Activated CD8-positive, alpha-beta T cell treated with anti-CD3 and anti-CD28 coated beads for 36 hours (primary cell): ENCODE measurements at regions of chr19 and their contacts with region 1.

Region 1: GRCh38 chr19:41951686-41952172 is 7.4 kb downstream of the RABAC1 start:
- DNase-seq: peak; percentile 94
- ATAC-seq: peak; percentile 96
- H3K4me3 Mint-ChIP-seq: no peak overlapping the region
- H3K27ac Mint-ChIP-seq: peak overlapping the region; percentile 58
- H3K4me1 Mint-ChIP-seq: peaks cover 28% of the 10 kb centered on the region
- H3K27me3 Mint-ChIP-seq: no peaks in the 10 kb centered on the region
- CTCF ChIP-seq: peak; percentile 100

Region 2: DNA sequence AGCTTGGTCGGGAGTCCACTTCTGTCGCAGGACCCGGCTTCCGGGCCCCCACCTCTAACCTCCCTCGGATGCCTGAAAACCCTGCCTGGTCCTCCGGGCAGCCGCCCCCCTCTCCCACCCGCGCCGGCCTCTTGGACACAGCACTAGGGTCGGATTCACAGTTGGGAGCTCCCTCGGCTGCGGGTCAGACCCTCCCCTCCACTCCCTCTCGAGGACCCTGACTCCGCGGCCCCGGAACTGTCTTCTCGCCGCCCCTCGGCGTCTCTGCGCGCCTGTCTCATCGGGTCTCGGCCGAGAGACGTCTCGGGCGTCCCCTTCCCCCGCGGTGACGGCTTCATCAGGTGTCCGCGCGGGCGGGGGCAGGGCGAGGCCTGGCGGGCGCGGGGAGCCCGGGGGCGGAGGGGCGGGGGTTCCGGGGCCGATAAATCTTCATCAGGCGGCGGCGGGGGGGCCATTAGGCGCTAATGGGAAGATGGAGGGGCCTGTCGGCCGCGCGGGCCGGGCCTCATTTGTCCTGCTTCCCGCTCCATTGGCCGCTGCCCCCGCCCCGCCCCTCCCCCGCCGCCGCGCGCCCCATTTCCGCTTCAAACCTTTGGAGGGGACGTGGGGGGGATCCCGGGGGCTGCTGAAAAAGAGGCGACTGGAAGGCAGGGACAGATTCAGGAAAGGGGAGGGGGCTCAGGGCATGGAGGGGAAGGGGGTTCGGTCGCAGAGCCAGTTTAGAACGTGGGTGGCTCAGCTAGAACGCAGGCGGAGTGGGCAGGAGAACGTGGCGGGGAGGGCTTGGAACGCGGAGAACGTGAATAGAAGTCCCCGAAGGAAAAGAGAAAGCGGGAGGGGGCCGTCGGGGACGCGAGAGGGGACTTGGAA is 11.6 kb before region 1 on chr19:
- CTCF ChIA-PET with region 1: interaction called, 18 read pairs
- POLR2A ChIA-PET with region 1: no interaction called
- intact Hi-C with region 1: no loop called
- DNase-seq: peak; percentile 69
- ATAC-seq: peak; percentile 50
- H3K4me3 Mint-ChIP-seq: peak overlapping the region; percentile 78
- H3K27ac Mint-ChIP-seq: peak overlapping the region; percentile 90
- H3K4me1 Mint-ChIP-seq: peaks cover 44% of the 10 kb centered on the region
- H3K27me3 Mint-ChIP-seq: peaks cover 17% of the 10 kb centered on the region
- CTCF ChIP-seq: no peak

Region 3: GRCh38 chr19:41993612-41994483 is 42.1 kb after region 1 on chr19 and contains the start of gene ATP1A3:
- CTCF ChIA-PET with region 1: no interaction called
- POLR2A ChIA-PET with region 1: no interaction called
- intact Hi-C with region 1: no loop called
- DNase-seq: peak; percentile 72
- ATAC-seq: peak; percentile 78
- H3K4me3 Mint-ChIP-seq: peak within 1 kb of the TSS; percentile 80
- H3K27ac Mint-ChIP-seq: no peak within 1 kb of the TSS
- H3K4me1 Mint-ChIP-seq: peaks cover 26% of the 10 kb centered on the region
- H3K27me3 Mint-ChIP-seq: peaks cover 33% of the 10 kb centered on the region
- CTCF ChIP-seq: no peak
- total RNA-seq, gene ATP1A3: 5.5 to 5.9 TPM